Caco-2 (cell line): ENCODE measurements at regions of chr10 and their contacts with region 1.

Region 1: GRCh38 chr10:79068562-79069324 is at the start of gene ZMIZ1:
- DNase-seq: peak; percentile 91 to 93
- H3K4me3 ChIP-seq: peak within 1 kb of the TSS; percentile 82
- H3K4me3 Mint-ChIP-seq: peak within 1 kb of the TSS; percentile 74
- H3K27ac Mint-ChIP-seq: peak within 1 kb of the TSS; percentile 89
- H3K4me1 ChIP-seq: peaks cover 37% of the 10 kb centered on the region
- H3K4me1 Mint-ChIP-seq: peaks cover 21% of the 10 kb centered on the region
- H3K27me3 ChIP-seq: no peaks in the 10 kb centered on the region
- H3K27me3 Mint-ChIP-seq: no peaks in the 10 kb centered on the region
- CTCF ChIP-seq: peak; percentile 25 to 41
- total RNA-seq, gene ZMIZ1: 42.3 and 43.7 TPM in 2 replicates

Region 2: GRCh38 chr10:78302989-78303854 is 765.5 kb before region 1 on chr10:
- CTCF ChIA-PET with region 1: interaction called, 6 read pairs
- POLR2A ChIA-PET with region 1: no interaction called
- intact Hi-C with region 1: loop called (anchors 2 kb)
- DNase-seq: peak; percentile 94 to 98
- H3K4me3 ChIP-seq: peak overlapping the region; percentile 69
- H3K4me3 Mint-ChIP-seq: peak overlapping the region; percentile 95
- H3K27ac Mint-ChIP-seq: peak overlapping the region; percentile 95
- H3K4me1 ChIP-seq: peaks cover 17% of the 10 kb centered on the region
- H3K4me1 Mint-ChIP-seq: peaks cover 13% of the 10 kb centered on the region
- H3K27me3 ChIP-seq: no peaks in the 10 kb centered on the region
- H3K27me3 Mint-ChIP-seq: peaks cover 15% of the 10 kb centered on the region
- CTCF ChIP-seq: peak; percentile 70 to 85

Region 3: GRCh38 chr10:78588194-78588811 is 480.4 kb before region 1 on chr10:
- CTCF ChIA-PET with region 1: interaction called, 4 read pairs
- POLR2A ChIA-PET with region 1: no interaction called
- intact Hi-C with region 1: loop called (anchors 2 kb)
- DNase-seq: peak; percentile 86 to 94
- H3K4me3 ChIP-seq: no peak overlapping the region
- H3K4me3 Mint-ChIP-seq: peak overlapping the region; percentile 43
- H3K27ac Mint-ChIP-seq: peak overlapping the region; percentile 94
- H3K4me1 ChIP-seq: peaks cover 71% of the 10 kb centered on the region
- H3K4me1 Mint-ChIP-seq: peaks cover 53% of the 10 kb centered on the region
- H3K27me3 ChIP-seq: no peaks in the 10 kb centered on the region
- H3K27me3 Mint-ChIP-seq: no peaks in the 10 kb centered on the region
- CTCF ChIP-seq: no peak

Region 4: GRCh38 chr10:78972947-78973900 is 95.5 kb before region 1 on chr10:
- CTCF ChIA-PET with region 1: interaction called, 9 read pairs
- POLR2A ChIA-PET with region 1: interaction called, 4 read pairs
- intact Hi-C with region 1: loop called (anchors 2 kb)
- DNase-seq: peak; percentile 83 to 86
- H3K4me3 ChIP-seq: peak overlapping the region; percentile 44
- H3K4me3 Mint-ChIP-seq: peak overlapping the region; percentile 84
- H3K27ac Mint-ChIP-seq: peak overlapping the region; percentile 89
- H3K4me1 ChIP-seq: peaks cover 23% of the 10 kb centered on the region
- H3K4me1 Mint-ChIP-seq: peaks cover 16% of the 10 kb centered on the region
- H3K27me3 ChIP-seq: no peaks in the 10 kb centered on the region
- H3K27me3 Mint-ChIP-seq: no peaks in the 10 kb centered on the region
- CTCF ChIP-seq: no peak

Region 5: GRCh38 chr10:79045566-79046175 is 23.1 kb before region 1 on chr10:
- CTCF ChIA-PET with region 1: no interaction called
- POLR2A ChIA-PET with region 1: no interaction called
- intact Hi-C with region 1: no loop called
- DNase-seq: peak in 1 of 2 experiments; percentile 10
- H3K4me3 ChIP-seq: no peak overlapping the region
- H3K4me3 Mint-ChIP-seq: no peak overlapping the region
- H3K27ac Mint-ChIP-seq: no peak overlapping the region
- H3K4me1 ChIP-seq: peaks cover 28% of the 10 kb centered on the region
- H3K4me1 Mint-ChIP-seq: peaks cover 23% of the 10 kb centered on the region
- H3K27me3 ChIP-seq: no peaks in the 10 kb centered on the region
- H3K27me3 Mint-ChIP-seq: no peaks in the 10 kb centered on the region
- CTCF ChIP-seq: no peak

Region 6: DNA sequence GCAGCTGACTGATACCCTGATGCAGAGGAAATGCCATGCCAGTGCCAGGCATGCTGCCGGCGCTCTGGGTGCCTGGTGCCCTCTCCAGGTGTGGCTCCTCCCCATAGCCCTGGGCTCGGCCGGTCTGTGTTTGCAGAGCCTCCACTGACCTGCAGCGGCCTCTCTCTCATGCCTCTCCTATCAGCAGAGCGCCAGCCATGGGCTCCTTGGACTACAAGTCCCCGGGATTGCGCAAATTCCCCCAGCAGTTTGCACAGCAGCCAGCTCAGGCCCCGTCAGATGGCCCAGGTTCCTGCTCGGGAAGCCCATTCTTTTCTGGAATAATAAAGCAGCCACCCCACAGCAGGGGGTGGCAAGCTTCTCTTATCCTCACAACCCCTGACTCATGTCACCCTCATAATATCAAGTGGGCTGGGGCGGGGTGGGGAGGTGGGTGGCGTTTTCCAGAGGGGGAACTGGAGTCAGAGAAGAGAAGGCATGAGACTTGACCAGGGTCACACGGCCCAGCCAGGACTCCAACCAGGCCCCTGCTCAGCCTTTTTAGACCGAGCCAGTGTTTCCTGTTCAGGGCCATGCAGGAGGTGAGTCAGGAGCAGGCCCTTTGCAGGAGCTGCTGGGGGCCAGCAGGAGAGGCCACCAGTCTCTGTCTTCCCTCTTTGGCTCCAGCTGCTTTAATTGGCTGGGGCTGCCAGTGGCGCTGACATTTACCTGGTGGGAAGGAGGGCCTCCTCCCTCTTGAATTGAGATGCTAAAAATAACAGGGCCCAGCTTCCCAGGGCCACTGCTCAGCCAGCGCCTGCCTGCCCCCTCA is 58.6 kb after region 1 on chr10:
- CTCF ChIA-PET with region 1: interaction called, 3 read pairs
- POLR2A ChIA-PET with region 1: no interaction called
- intact Hi-C with region 1: loop called (anchors 2 kb)
- DNase-seq: peak; percentile 91 to 94
- H3K4me3 ChIP-seq: no peak overlapping the region
- H3K4me3 Mint-ChIP-seq: no peak overlapping the region
- H3K27ac Mint-ChIP-seq: peak overlapping the region; percentile 48
- H3K4me1 ChIP-seq: peaks cover 31% of the 10 kb centered on the region
- H3K4me1 Mint-ChIP-seq: peaks cover 14% of the 10 kb centered on the region
- H3K27me3 ChIP-seq: no peaks in the 10 kb centered on the region
- H3K27me3 Mint-ChIP-seq: no peaks in the 10 kb centered on the region
- CTCF ChIP-seq: peak in 1 of 2 experiments; percentile 23